ENCODE measurements at regions of chr2 and their contacts with region 1.

Region 1: GRCh38 chr2:74587664-74588277 is 33.3 kb downstream of the DOK1 start:
- DNase-seq: peak; percentile 73
- H3K4me3 Mint-ChIP-seq: no peak overlapping the region
- H3K27ac Mint-ChIP-seq: no peak overlapping the region
- H3K4me1 Mint-ChIP-seq: peaks cover 36% of the 10 kb centered on the region
- H3K27me3 Mint-ChIP-seq: peaks cover 13% of the 10 kb centered on the region

Region 2: DNA sequence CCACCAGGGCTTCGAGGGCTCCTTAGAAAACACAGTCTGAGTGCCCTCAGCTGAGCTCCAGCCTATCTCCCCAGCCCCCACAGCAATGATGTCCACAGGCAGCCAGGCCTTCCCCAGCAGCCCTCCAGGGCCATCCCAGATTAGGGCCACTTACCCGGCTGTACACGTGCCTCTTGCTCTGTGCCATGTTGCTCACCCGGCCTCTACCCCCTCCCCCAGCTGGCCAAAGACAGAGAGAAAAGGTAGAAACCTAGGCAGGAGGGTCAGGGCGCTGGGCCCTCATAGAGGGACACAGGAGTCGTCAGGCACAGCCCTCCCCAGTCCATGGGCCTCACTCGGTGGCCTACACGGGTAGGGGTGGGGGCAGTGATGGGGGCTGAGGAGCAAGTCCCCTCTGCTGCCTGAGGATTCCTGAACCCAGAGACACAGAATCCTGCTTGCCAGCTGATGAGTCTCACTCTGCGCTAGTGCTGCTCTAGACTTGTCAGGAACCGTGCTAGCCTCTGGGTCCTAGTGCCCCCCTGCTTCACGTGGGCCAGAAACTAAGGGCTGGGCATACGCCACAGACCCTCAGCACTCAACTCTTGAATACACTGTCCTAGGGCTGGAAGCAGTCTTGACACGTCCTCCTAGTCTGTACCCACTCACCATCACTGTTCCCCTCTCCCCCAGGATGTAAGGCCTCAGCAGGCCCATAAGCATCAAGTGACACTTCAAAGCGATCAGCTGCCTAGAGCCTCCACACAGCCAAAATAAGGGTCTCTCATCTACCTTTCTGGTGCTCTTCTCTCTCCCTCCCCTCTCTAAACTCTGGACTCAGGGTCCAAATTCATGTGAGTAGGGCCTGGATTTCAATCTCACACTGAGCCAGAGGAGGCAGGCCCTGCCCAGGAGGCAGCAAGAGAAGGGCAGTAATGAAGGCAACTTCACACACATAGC is 207.7 kb before region 1 on chr2 and contains the start of gene DCTN1:
- CTCF ChIA-PET with region 1: no interaction called
- POLR2A ChIA-PET with region 1: no interaction called
- DNase-seq: no peak
- H3K4me3 Mint-ChIP-seq: no peak within 1 kb of the TSS
- H3K27ac Mint-ChIP-seq: no peak within 1 kb of the TSS
- H3K4me1 Mint-ChIP-seq: peaks cover 22% of the 10 kb centered on the region
- H3K27me3 Mint-ChIP-seq: no peaks in the 10 kb centered on the region
- total RNA-seq, gene DCTN1: 88.9 to 99.7 TPM

Region 3: DNA sequence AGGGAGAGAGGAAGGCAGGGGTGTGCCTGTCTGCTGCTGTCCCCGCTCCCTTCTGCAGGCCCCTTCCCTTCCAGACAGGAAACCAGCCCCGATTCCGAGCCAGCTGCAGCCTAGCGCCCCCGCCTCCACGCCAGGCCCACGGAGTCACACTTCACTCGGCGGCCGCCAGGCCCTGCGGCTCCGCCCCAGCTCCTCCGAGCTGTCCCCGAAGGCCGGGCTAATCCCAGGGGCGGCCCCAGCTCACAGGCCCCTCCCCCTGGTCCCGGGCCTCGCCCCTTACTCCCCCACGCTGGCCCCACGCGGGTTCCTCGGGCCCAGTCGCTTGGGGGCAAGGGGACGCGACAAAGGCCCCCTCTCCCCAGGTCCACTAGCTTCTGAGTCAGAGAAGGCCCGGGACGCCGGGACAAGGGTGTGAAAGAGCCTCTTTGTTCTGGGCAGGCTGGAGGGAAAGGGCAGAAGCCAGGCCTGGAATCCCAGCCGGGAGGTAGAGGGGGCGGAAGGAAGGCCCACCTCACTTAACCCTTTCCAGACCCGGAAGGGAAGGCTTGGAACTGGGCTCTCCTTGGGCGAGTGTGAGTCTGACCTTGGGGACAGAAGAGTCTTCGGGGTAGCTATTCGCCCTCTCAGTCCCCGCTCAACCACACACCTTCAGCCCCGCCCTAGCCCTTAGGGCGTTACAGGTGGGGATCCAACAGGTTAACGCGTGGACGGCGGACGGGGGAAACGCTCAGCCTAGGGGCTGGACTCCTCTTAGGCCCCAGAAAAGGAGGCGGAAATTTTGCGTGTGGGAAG is 147.2 kb before region 1 on chr2:
- CTCF ChIA-PET with region 1: no interaction called
- POLR2A ChIA-PET with region 1: no interaction called
- DNase-seq: peak; percentile 42
- H3K4me3 Mint-ChIP-seq: peak overlapping the region; percentile 19
- H3K27ac Mint-ChIP-seq: no peak overlapping the region
- H3K4me1 Mint-ChIP-seq: peaks cover 11% of the 10 kb centered on the region
- H3K27me3 Mint-ChIP-seq: peaks cover 51% of the 10 kb centered on the region

Region 4: DNA sequence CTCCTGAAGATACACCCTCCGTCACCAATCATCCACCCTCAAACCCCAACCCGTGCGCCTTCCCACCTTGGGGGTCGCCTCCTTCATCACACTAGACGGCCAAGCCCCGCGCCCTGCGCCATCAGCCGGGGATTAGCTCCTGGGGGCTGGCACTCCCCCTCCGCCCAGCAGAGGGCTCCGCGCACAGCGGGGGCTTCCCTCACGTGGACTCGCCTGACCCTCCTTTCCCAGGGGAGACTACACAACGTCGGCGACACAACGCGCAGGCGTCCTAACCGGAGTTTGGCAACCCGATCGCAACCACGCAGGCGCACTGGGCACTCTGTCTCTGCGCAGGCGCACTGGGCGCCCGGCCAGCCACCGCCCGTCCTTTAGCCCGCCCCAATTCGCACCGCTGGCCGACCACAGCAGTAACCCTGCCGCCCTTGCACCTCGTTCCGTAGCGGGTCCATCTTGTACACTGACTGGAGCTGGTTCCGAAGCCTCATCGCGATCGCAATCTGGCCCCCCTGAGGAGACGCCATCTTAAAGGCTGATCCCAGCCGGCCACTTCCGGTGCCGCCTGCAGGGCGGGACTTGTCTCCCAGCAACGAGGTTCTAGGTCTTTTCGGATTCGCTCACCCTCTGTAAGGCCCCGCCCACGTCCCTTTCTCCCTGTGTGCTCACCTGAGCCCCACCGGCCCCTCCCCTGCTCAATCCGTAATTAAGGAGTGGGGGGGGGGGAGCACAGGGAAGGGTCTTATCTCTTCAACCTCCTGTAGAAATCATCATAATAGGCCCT is 80.4 kb before region 1 on chr2 and contains the start of gene PCGF1:
- CTCF ChIA-PET with region 1: interaction called, 10 read pairs
- POLR2A ChIA-PET with region 1: interaction called, 4 read pairs
- DNase-seq: peak; percentile 98
- H3K4me3 Mint-ChIP-seq: peak within 1 kb of the TSS; percentile 97
- H3K27ac Mint-ChIP-seq: peak within 1 kb of the TSS; percentile 99
- H3K4me1 Mint-ChIP-seq: peaks cover 69% of the 10 kb centered on the region
- H3K27me3 Mint-ChIP-seq: peaks cover 29% of the 10 kb centered on the region
- total RNA-seq, gene PCGF1: 23.0 to 31.4 TPM

Region 5: GRCh38 chr2:74553892-74554645 is 33.7 kb before region 1 on chr2 and contains the start of gene LOXL3:
- CTCF ChIA-PET with region 1: interaction called, 12 read pairs
- POLR2A ChIA-PET with region 1: interaction called, 15 read pairs
- DNase-seq: peak; percentile 84
- H3K4me3 Mint-ChIP-seq: peak within 1 kb of the TSS; percentile 97
- H3K27ac Mint-ChIP-seq: peak within 1 kb of the TSS; percentile 94
- H3K4me1 Mint-ChIP-seq: peaks cover 21% of the 10 kb centered on the region
- H3K27me3 Mint-ChIP-seq: peaks cover 19% of the 10 kb centered on the region
- total RNA-seq, gene LOXL3: 0.60 to 0.70 TPM

Region 6: GRCh38 chr2:74573747-74574562 is 13.8 kb before region 1 on chr2:
- CTCF ChIA-PET with region 1: interaction called, 65 read pairs
- POLR2A ChIA-PET with region 1: interaction called, 9 read pairs
- DNase-seq: no peak
- H3K4me3 Mint-ChIP-seq: peak overlapping the region; percentile 48
- H3K27ac Mint-ChIP-seq: peak overlapping the region; percentile 77
- H3K4me1 Mint-ChIP-seq: peaks cover 51% of the 10 kb centered on the region
- H3K27me3 Mint-ChIP-seq: no peaks in the 10 kb centered on the region